ENCODE measurements at regions of chrX and their contacts with region 1.

Region 1: DNA sequence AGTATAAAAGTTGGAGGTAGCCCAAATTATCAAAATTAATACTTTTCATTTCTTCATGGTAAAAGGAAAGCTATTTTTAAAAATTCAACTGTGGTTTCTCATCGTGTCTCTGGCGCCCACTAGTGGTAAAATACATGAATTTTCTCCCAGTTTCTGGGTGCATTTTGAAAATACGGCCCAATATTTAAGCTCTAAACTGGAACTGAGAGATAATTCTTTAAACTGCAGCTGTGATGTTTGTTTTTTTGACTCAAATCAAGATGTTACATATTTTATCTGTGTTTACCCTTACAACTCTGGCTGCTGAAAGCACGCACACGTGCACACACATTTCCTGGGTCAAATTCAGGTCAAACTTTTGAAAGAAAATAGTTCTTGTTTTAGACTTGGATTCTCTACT is 123.9 kb upstream of the ACSL4 start:
- DNase-seq: peak; percentile 21
- ATAC-seq: no peak
- H3K4me3 Mint-ChIP-seq: no peak overlapping the region
- H3K27ac Mint-ChIP-seq: no peak overlapping the region
- H3K4me1 Mint-ChIP-seq: peaks cover 8% of the 10 kb centered on the region
- H3K27me3 Mint-ChIP-seq: peaks cover 4% of the 10 kb centered on the region

Region 2: GRCh38 chrX:109485470-109486340 is 371.3 kb before region 1 on chrX:
- CTCF ChIA-PET with region 1: interaction called, 14 read pairs
- POLR2A ChIA-PET with region 1: no interaction called
- DNase-seq: peak; percentile 71
- ATAC-seq: peak; percentile 23
- H3K4me3 Mint-ChIP-seq: no peak overlapping the region
- H3K27ac Mint-ChIP-seq: no peak overlapping the region
- H3K4me1 Mint-ChIP-seq: no peaks in the 10 kb centered on the region
- H3K27me3 Mint-ChIP-seq: peaks cover 6% of the 10 kb centered on the region

Region 3: GRCh38 chrX:109709129-109709631 is 147.8 kb before region 1 on chrX:
- CTCF ChIA-PET with region 1: interaction called, 122 read pairs
- POLR2A ChIA-PET with region 1: no interaction called
- DNase-seq: no peak
- ATAC-seq: peak; percentile 46
- H3K4me3 Mint-ChIP-seq: peak overlapping the region; percentile 55
- H3K27ac Mint-ChIP-seq: peak overlapping the region; percentile 89
- H3K4me1 Mint-ChIP-seq: peaks cover 59% of the 10 kb centered on the region
- H3K27me3 Mint-ChIP-seq: no peaks in the 10 kb centered on the region

Region 4: DNA sequence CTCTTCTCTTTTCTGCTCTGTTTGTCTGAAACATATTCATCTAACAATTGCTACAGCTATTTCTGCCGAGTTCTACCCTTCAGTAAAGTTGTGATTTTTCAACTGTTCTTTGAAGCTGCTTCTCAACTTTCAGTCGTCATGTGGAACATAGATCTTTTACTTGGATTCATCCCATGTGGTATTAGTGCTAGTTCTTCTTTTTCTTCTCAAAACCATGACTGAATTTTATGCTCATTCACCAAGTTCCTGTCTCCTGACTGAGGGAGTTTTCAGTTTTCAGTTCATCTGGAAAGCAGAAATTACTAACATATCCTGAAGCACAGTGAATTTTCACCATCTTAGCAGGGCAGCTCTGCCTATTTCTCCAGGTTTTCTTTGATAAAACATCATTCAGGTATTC is 136.0 kb before region 1 on chrX:
- CTCF ChIA-PET with region 1: interaction called, 122 read pairs
- POLR2A ChIA-PET with region 1: no interaction called
- DNase-seq: no peak
- ATAC-seq: no peak
- H3K4me3 Mint-ChIP-seq: no peak overlapping the region
- H3K27ac Mint-ChIP-seq: no peak overlapping the region
- H3K4me1 Mint-ChIP-seq: peaks cover 18% of the 10 kb centered on the region
- H3K27me3 Mint-ChIP-seq: no peaks in the 10 kb centered on the region

Region 5: DNA sequence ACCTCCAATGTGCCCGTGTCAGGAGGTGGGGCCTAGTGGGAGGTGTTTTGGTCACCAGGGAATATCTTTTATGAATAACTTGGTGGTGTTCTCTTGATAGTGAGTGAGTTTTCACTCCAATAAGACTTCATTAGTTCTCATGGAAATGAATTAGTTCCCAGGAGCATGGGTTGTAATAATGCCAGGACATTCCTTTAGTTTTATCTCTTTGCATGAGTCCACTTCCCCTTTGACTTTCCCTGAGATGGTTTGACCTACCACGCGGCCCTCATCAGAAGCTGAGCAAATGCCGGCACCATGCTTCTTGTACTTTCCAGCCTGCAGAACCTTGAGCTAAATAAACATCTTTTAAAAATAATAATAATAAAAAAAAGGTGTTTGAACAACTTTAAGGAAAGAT is 11.0 kb before region 1 on chrX:
- CTCF ChIA-PET with region 1: interaction called, 10 read pairs
- POLR2A ChIA-PET with region 1: no interaction called
- DNase-seq: no peak
- ATAC-seq: no peak
- H3K4me3 Mint-ChIP-seq: no peak overlapping the region
- H3K27ac Mint-ChIP-seq: no peak overlapping the region
- H3K4me1 Mint-ChIP-seq: peaks cover 3% of the 10 kb centered on the region
- H3K27me3 Mint-ChIP-seq: no peaks in the 10 kb centered on the region

Region 6: DNA sequence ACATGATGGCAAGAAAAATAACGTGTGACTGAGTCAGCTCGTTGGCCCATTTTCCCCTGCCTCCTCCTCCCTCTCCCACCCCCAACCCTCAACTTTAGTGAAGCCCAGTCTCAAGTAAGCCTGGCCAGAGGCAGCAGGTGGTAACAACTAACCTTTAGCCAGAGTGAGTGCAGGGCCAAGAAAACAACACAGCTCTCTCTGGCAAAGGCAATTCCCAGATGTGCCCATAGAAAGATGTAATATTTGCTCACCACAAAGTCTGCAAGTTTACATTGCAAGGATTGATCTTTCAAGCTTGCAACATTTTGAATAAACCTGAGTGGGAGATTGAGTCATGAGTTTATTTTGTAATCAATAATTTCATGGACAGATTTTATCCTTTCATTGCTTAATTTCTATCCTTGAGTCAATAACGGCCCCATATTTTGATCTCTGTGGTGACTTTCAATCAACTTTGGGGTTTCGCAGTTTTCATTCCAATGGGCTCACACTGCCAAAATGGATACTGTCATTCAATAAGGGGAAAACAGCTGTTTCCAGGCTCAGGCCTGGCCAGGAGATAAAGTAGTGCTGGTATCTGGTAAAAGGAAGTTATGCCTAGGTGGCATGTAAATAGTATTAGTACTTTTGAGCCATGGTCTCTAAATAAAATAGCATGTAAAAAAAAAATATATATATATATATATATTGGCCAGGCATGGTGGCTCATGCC is 15.2 kb after region 1 on chrX:
- CTCF ChIA-PET with region 1: interaction called, 10 read pairs
- POLR2A ChIA-PET with region 1: no interaction called
- DNase-seq: no peak
- ATAC-seq: no peak
- H3K4me3 Mint-ChIP-seq: no peak overlapping the region
- H3K27ac Mint-ChIP-seq: no peak overlapping the region
- H3K4me1 Mint-ChIP-seq: no peaks in the 10 kb centered on the region
- H3K27me3 Mint-ChIP-seq: peaks cover 2% of the 10 kb centered on the region

Region 7: GRCh38 chrX:109880629-109881028 is 23.7 kb after region 1 on chrX:
- CTCF ChIA-PET with region 1: interaction called, 11 read pairs
- POLR2A ChIA-PET with region 1: no interaction called
- DNase-seq: no peak
- ATAC-seq: no peak
- H3K4me3 Mint-ChIP-seq: no peak overlapping the region
- H3K27ac Mint-ChIP-seq: no peak overlapping the region
- H3K4me1 Mint-ChIP-seq: no peaks in the 10 kb centered on the region
- H3K27me3 Mint-ChIP-seq: peaks cover 8% of the 10 kb centered on the region

Region 8: GRCh38 chrX:109920325-109920724 is 63.4 kb after region 1 on chrX:
- CTCF ChIA-PET with region 1: no interaction called
- POLR2A ChIA-PET with region 1: no interaction called
- DNase-seq: no peak
- ATAC-seq: no peak
- H3K4me3 Mint-ChIP-seq: no peak overlapping the region
- H3K27ac Mint-ChIP-seq: no peak overlapping the region
- H3K4me1 Mint-ChIP-seq: peaks cover 4% of the 10 kb centered on the region
- H3K27me3 Mint-ChIP-seq: no peaks in the 10 kb centered on the region

Region 9: DNA sequence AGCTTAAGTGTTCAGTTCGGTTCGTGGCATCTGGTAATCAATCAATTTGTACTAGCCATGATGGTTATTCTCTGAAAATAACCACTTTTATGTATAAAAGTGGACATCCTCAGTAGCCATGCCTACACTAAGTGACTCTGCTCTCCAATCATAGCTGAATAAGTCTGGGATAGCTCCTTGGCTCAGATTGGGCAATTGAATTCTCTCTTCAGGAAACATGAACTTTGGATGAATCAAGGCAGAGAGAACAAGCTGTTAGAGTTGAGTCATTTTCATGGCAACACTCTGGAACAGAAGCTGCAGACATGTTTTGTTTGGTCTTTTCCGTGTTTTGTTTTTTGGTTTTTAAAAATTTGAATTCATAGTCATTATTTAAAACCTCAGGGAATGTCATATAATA is 79.1 kb after region 1 on chrX:
- CTCF ChIA-PET with region 1: no interaction called
- POLR2A ChIA-PET with region 1: no interaction called
- DNase-seq: no peak
- ATAC-seq: no peak
- H3K4me3 Mint-ChIP-seq: no peak overlapping the region
- H3K27ac Mint-ChIP-seq: no peak overlapping the region
- H3K4me1 Mint-ChIP-seq: no peaks in the 10 kb centered on the region
- H3K27me3 Mint-ChIP-seq: peaks cover 7% of the 10 kb centered on the region

Region 10: DNA sequence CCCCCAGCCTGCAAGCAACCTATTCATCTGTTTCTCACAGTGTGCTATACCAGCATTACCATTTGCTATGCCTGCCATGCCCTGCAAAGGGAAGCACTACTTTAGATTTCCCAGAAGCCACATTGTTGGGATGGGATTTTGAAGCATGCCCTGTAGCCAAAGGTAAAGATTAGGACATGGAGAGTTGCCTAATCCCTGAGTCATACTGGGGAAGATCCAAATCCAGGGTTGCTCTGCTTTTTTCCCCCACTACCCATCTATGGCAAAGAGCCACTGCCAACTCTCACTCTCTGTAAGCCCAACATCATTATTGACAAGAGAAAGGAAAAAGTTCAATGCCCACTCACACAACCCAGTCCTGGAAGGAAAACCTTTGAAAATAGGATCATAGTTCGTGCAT is 109.3 kb after region 1 on chrX:
- CTCF ChIA-PET with region 1: no interaction called
- POLR2A ChIA-PET with region 1: no interaction called
- DNase-seq: no peak
- ATAC-seq: no peak
- H3K4me3 Mint-ChIP-seq: no peak overlapping the region
- H3K27ac Mint-ChIP-seq: no peak overlapping the region
- H3K4me1 Mint-ChIP-seq: no peaks in the 10 kb centered on the region
- H3K27me3 Mint-ChIP-seq: no peaks in the 10 kb centered on the region